ENCODE measurements at regions of chr10 and their contacts with region 1.

Region 1: GRCh38 chr10:130352291-130352645 is 216.1 kb downstream of the GLRX3 start:
- DNase-seq: no peak
- H3K4me3 ChIP-seq: no peak overlapping the region
- H3K27ac ChIP-seq: no peak overlapping the region
- H3K4me1 ChIP-seq: no peaks in the 10 kb centered on the region
- H3K27me3 ChIP-seq: no peaks in the 10 kb centered on the region
- CTCF ChIP-seq: no peak

Region 2: GRCh38 chr10:129398711-129399141 is 953.5 kb before region 1 on chr10:
- CTCF ChIA-PET with region 1: interaction called, 14 read pairs
- dilution Hi-C with region 1: no loop called
- in situ Hi-C with region 1: no loop called
- intact Hi-C with region 1: no loop called
- DNase-seq: no peak
- H3K4me3 ChIP-seq: no peak overlapping the region
- H3K27ac ChIP-seq: no peak overlapping the region
- H3K4me1 ChIP-seq: no peaks in the 10 kb centered on the region
- H3K27me3 ChIP-seq: no peaks in the 10 kb centered on the region
- CTCF ChIP-seq: no peak